Activated CD8-positive, alpha-beta memory T cell treated with anti-CD3 and anti-CD28 coated beads, Interleukin-2, amount 10 ng/mL, durations not matched to agents 7 days and 5 days (primary cell): ENCODE measurements at regions of chr16 and their contacts with region 1.

Region 1: GRCh38 chr16:57591086-57591869 is 37.2 kb upstream of the ADGRG1 start:
- DNase-seq: peak; percentile 90
- ATAC-seq: peak; percentile 78
- H3K4me3 Mint-ChIP-seq: peak overlapping the region; percentile 68
- H3K27ac Mint-ChIP-seq: peak overlapping the region; percentile 91
- H3K4me1 Mint-ChIP-seq: peaks cover 67% of the 10 kb centered on the region
- H3K27me3 Mint-ChIP-seq: no peaks in the 10 kb centered on the region

Region 2: GRCh38 chr16:57667526-57668258 is 76.4 kb after region 1 on chr16:
- CTCF ChIA-PET with region 1: no interaction called
- DNase-seq: no peak
- ATAC-seq: no peak
- H3K4me3 Mint-ChIP-seq: no peak overlapping the region
- H3K27ac Mint-ChIP-seq: no peak overlapping the region
- H3K4me1 Mint-ChIP-seq: peaks cover 7% of the 10 kb centered on the region
- H3K27me3 Mint-ChIP-seq: peaks cover 11% of the 10 kb centered on the region

Region 3: GRCh38 chr16:57700781-57701551 is 109.7 kb after region 1 on chr16:
- CTCF ChIA-PET with region 1: no interaction called
- DNase-seq: no peak
- ATAC-seq: no peak
- H3K4me3 Mint-ChIP-seq: no peak overlapping the region
- H3K27ac Mint-ChIP-seq: no peak overlapping the region
- H3K4me1 Mint-ChIP-seq: no peaks in the 10 kb centered on the region
- H3K27me3 Mint-ChIP-seq: no peaks in the 10 kb centered on the region

Region 4: DNA sequence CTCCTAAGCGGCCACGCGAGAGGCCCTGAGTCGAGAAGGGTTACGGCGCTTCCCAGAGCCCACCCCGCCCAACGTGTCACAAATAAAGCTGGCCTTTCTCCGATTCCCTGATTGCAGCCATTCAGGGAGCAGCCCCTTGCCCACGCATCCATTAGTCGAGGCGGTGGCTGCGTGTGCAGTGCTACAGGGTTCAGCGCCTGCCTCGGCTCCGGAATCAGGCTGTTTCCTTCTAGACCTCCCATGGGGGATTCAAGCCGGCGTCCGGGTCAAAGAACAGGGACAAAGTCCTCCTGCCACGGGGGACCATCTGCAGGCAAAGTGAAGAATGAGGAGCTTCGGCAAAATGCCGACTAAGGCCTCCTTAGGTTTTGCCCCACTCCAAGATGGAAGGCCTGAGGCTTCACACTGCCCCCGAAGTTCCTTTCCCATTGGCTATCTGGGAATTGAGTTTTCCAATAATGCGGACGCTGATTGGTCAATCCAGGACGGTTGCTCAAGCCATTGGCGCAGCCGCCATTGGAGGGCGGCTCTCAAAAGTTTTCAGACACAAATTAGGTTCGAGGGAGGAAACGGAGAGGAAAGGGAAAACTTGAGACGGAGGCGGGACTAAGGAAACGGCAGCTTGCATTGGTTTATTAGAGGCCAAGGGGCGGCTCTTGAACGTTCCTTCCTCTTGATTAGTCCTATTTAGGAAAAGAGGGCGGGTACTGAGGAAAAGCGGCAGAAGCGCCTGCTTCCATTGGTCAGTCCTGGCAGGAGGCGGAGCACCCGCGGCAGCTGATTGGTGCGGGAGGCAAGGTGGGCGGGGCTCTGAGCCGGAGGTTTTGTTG is 143.9 kb after region 1 on chr16:
- CTCF ChIA-PET with region 1: interaction called, 11 read pairs
- DNase-seq: peak; percentile 99
- ATAC-seq: peak; percentile 90
- H3K4me3 Mint-ChIP-seq: peak overlapping the region; percentile 92
- H3K27ac Mint-ChIP-seq: peak overlapping the region; percentile 92
- H3K4me1 Mint-ChIP-seq: peaks cover 32% of the 10 kb centered on the region
- H3K27me3 Mint-ChIP-seq: no peaks in the 10 kb centered on the region